ENCODE measurements at regions of chr4 and their contacts with region 1.

Region 1: DNA sequence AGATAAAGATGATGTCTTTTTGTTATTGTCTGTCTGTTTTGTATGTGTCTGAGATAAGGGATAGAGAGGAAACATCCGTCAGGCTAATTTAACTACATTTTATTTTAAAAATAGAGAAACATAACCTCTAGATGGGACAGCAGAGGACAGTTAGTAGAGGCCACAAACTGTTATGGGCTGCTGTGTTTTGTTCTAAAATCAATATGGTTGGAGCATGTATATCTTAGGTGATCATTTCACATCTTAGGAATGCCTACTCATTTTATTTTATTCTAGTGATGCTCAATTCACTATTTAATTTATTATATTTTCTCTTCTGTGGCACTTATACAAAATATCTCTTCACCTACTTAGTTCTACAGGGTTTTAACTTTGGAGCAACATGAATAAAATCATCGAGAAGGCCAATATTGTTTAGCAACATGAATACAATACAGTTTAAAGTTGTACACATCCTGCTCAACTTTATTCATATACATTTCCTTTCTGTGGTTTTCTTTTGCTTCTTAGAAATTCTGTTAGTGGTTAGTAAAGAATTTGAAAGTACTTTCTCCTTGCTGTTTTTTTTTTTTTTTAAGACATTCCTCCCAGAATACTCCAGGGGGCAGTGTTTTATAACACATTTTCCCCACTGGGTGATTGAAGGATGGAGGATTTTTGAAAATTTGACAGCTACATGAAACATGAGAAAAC is 392.9 kb downstream of the UNC5C start:
- DNase-seq: peak in 1 of 3 donors; percentile 3
- H3K4me3 ChIP-seq: no peak overlapping the region
- H3K4me3 Mint-ChIP-seq: peak overlapping the region in 1 of 2 donors; percentile 67
- H3K27ac ChIP-seq: no peak overlapping the region
- H3K27ac Mint-ChIP-seq: no peak overlapping the region
- H3K4me1 ChIP-seq: no peaks in the 10 kb centered on the region
- H3K4me1 Mint-ChIP-seq: peaks cover 4% of the 10 kb centered on the region
- H3K27me3 ChIP-seq: no peaks in the 10 kb centered on the region
- H3K27me3 Mint-ChIP-seq: peaks cover 0 to 5% (median 0%) of the 10 kb centered on the region in 3 donors
- CTCF ChIP-seq: peak; percentile 85

Region 2: DNA sequence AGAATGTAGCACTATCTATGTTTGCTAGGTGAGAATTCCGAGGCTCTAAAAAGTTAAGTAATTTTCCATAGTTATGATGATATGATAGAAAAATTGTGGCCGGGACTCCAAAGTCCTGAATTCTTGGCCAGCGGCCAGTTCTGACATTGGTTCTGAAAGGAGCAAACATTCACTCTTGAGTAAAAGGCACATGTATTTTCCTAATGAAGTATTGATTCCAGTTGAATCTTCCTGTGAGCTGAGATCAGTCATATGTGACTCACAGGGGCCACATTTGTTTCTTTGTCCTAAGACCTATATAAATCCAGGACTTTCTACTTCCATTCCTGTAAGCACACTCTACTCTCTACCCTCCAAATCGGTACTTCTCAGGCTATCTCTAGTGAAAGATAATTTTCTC is 48.3 kb before region 1 on chr4:
- intact Hi-C with region 1: no loop called
- DNase-seq: no peak
- H3K4me3 ChIP-seq: no peak overlapping the region
- H3K4me3 Mint-ChIP-seq: no peak overlapping the region
- H3K27ac ChIP-seq: no peak overlapping the region
- H3K27ac Mint-ChIP-seq: no peak overlapping the region
- H3K4me1 ChIP-seq: no peaks in the 10 kb centered on the region
- H3K4me1 Mint-ChIP-seq: no peaks in the 10 kb centered on the region
- H3K27me3 ChIP-seq: no peaks in the 10 kb centered on the region
- H3K27me3 Mint-ChIP-seq: no peaks in the 10 kb centered on the region
- CTCF ChIP-seq: no peak

Region 3: GRCh38 chr4:96352051-96352517 is 1196.2 kb after region 1 on chr4:
- intact Hi-C with region 1: loop called in 1 of 2 experiments (anchors 10 kb)
- DNase-seq: no peak
- H3K4me3 ChIP-seq: no peak overlapping the region
- H3K4me3 Mint-ChIP-seq: no peak overlapping the region
- H3K27ac ChIP-seq: no peak overlapping the region
- H3K27ac Mint-ChIP-seq: no peak overlapping the region
- H3K4me1 ChIP-seq: no peaks in the 10 kb centered on the region
- H3K4me1 Mint-ChIP-seq: no peaks in the 10 kb centered on the region
- H3K27me3 ChIP-seq: no peaks in the 10 kb centered on the region
- H3K27me3 Mint-ChIP-seq: no peaks in the 10 kb centered on the region
- CTCF ChIP-seq: no peak

Measured in CD14-positive monocyte (primary cell).